Mucosa of descending colon (tissue), 3 donors: ENCODE measurements at regions of chr6 and their contacts with region 1.

Region 1: DNA sequence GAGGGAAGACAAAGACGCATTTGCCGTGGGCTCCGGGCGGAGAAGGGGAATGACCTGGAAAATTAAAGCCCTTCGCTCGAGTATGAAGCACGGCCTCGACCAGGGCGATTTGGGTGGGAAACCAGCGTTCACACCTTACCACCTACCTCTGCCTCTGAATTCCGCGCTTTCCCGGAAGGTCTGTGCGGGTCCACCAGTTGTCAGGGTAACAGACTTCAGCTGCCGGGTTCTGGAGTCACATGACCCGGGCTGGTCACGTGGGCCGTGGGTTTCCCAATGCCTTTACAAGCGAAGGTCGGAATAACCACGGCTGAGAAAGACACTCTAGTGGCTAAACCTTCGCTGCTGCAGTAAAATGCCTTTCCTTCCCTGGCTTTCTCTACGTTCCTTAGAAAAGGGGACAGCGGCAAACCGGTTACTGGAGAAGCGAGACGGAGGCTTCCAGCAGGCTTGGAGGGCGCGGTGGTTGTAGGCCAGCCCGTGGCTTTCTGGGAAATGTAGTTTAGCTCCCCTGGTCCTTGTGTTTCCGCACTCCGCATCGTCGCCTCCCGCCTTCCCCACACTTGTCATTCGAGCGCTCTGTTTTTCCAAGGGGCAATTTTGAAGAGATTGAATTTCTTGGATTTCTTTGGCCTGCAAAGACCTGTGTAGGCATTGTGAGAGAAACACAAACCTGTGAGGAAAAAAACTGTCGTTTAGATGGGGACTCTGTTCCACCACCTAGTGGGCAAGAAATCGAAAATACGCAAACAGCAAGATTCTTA is at the start of gene CEP162:
- DNase-seq: peak; percentile 92 to 98 (median 95)
- ATAC-seq: peak; percentile 97
- H3K4me3 ChIP-seq: peak within 1 kb of the TSS; percentile 48
- H3K4me1 ChIP-seq: no peaks in the 10 kb centered on the region
- CTCF ChIP-seq: no peak
- total RNA-seq, gene CEP162: 7.5 to 13.0 (median 9.5) TPM

Region 2: DNA sequence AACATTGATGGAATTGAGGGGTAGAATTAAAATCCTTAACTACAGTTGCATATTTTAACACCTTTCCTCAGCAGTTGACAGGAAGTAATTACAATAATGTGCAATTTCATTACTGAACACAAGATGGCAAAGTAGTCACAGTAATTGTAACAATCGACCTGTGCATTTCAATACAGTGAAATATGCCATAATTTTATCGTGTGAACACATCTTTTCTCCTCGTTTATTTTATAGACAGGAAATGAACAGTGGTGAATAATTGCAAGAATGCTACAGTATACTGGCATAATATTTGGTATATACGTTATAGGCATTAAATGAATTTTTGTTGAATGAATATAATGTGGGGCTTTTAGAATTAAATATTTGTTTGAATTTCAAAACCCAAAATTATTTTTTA is 343.1 kb before region 1 on chr6:
- intact Hi-C with region 1: loop called (anchors 5 to 10 kb)
- DNase-seq: no peak
- ATAC-seq: peak; percentile 81
- H3K4me3 ChIP-seq: peak overlapping the region; percentile 1
- H3K4me1 ChIP-seq: no peaks in the 10 kb centered on the region
- CTCF ChIP-seq: no peak